HEK293 (cell line): ENCODE measurements at regions of chr6 and their contacts with region 1.

Region 1: DNA sequence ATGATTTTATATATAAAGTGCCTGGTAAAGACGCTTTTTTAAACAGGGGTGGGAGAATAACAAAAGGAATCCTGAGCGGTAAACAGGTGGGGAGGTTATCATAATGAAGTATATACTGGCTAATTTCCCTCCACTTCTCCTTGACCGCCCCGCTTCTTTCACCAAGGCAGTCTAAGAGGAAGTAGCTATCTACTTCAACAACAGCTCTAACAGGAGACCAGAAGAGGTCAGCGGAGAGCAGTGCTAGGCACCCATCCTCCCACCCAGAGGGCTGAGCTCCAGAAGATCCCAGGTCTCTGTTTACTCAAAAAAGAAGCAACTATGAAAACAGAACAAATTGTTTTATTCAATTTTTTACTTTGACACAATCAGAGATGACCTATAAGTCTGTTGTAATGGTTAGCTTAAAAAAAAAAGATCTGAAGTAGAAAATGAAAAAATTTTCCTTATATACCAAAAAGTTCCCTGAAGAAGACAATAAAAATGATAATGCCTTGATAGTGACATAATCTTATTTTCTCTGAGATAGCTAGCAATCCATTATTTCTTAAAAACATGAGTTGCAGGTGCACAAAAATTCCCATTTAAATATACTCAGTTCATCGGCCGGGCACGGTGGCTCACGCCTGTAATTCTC is 141.1 kb downstream of the PDSS2 start:
- H3K4me3 ChIP-seq: no peak overlapping the region
- H3K27ac ChIP-seq: no peak overlapping the region
- H3K4me1 ChIP-seq: peaks cover 5% of the 10 kb centered on the region; the same call in 1 of the 2 replicates
- CTCF ChIP-seq: peak; percentile 48; the same call in 1 of the 2 replicates

Region 2: DNA sequence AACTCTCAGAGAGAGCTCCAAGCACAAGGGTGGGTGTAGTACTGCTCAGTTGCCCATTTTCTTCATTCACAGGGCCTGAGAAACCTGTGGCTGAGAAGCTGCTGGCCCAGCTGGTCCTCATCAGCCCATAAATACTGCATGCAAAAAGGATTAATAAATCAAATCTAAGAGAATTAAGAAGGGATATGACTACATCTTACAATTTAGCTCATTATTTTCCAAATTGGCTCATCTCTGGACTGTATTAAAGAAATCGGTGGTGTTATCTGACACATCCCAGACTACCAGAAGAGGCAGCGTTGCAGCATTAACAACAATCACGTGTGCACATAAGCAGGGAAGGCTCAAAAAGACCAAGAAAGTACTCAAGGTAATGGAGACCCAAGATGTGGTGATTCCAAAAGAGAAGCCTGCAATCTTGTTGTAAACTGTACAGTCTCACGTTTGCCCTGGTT is 434.4 kb before region 1 on chr6:
- CTCF ChIA-PET with region 1: no interaction called
- POLR2A ChIA-PET with region 1: no interaction called
- H3K4me3 ChIP-seq: no peak overlapping the region
- H3K27ac ChIP-seq: no peak overlapping the region
- H3K4me1 ChIP-seq: peaks cover 4% of the 10 kb centered on the region; the same call in 1 of the 2 replicates
- CTCF ChIP-seq: no peak

Region 3: DNA sequence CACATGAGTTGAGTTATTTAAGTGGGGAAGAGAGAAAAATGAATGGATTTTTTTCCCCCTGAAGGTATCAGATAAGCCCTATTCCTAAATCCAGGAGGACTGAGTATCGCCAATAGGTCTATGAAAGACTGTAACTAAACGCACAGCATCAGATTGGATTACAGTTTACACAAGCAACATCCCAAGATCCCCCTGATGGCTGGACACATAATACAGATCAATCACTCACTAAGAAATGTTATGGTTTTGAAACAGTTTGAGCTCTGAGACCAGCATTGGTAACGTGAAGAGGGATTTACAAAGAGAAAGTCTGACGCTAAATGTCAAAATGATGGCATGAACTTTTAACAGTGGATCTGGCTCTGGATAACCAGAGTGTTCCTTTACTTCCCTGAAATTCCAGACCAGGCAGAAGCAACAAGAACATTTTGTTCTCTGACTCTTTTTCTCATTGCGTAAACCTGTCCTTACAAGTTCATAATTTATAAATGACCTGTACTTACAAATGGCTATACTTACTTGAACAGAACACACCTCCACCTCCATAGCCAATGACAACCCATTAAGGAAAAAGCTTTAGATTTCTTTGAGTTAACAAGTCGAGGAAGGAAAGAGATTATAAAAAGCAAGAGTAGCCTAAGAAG is 71.1 kb before region 1 on chr6:
- CTCF ChIA-PET with region 1: no interaction called
- POLR2A ChIA-PET with region 1: no interaction called
- H3K4me3 ChIP-seq: no peak overlapping the region
- H3K27ac ChIP-seq: no peak overlapping the region
- H3K4me1 ChIP-seq: peaks cover 20% of the 10 kb centered on the region
- CTCF ChIP-seq: no peak

Region 4: GRCh38 chr6:107330168-107330567 is 11.9 kb after region 1 on chr6:
- CTCF ChIA-PET with region 1: interaction called, 17 read pairs
- POLR2A ChIA-PET with region 1: no interaction called
- H3K4me3 ChIP-seq: no peak overlapping the region
- H3K27ac ChIP-seq: no peak overlapping the region
- H3K4me1 ChIP-seq: no peaks in the 10 kb centered on the region; the same call in 1 of the 2 replicates
- CTCF ChIP-seq: no peak

Region 5: GRCh38 chr6:107418118-107418517 is 99.9 kb after region 1 on chr6:
- CTCF ChIA-PET with region 1: interaction called, 17 read pairs
- POLR2A ChIA-PET with region 1: no interaction called
- H3K4me3 ChIP-seq: no peak overlapping the region
- H3K27ac ChIP-seq: no peak overlapping the region
- H3K4me1 ChIP-seq: peaks cover 4% of the 10 kb centered on the region; the same call in 1 of the 2 replicates
- CTCF ChIP-seq: no peak

Region 6: DNA sequence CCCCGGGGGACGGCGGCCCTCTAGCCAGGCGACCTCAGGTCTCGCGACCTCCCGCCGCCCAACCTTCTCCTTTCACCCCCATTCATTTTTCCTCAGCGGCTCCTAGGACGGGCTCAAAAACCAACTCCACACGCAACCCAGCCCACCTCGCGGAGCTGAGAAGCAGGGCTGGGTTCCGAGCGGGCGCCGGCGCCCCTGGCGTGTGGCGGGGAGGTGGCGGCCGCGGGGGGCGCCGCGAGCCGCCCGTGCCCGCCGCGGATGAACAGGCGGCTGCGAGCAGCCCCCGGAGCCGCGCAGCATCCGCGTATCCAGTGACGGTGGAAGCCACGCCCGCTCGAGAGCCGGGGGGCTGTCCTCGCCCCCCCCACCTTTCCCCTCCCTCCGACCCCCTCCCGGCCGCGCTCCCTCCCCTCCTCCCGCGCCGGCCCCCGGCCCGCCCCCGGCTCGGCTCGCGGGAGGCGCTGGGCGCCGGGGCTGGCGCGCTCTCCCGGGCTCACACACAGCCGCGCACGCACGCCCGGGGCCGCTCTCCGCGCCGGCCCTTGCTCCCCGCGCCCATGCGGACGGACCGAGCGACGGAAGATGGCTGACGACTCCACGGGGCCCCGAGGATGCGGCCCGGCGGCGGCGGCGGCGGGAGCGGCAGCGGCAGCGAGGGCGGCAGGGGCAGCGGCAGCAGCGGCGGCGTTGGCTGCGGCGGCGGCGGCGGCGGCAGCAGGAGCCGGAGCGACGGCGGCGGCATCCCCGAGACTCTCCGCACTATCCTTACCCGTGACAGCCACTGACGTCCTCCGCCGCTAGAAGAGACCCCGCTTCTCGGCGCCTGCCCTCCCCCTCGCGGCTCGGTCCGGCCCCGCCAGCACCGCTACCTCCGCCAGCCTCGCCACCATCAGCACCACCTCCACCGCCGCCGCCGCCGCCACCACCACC is 171.7 kb after region 1 on chr6 and contains the start of gene SOBP:
- CTCF ChIA-PET with region 1: interaction called, 12 read pairs
- POLR2A ChIA-PET with region 1: interaction called, 4 read pairs
- H3K4me3 ChIP-seq: peak within 1 kb of the TSS; percentile 88
- H3K27ac ChIP-seq: peak within 1 kb of the TSS; percentile 94
- H3K4me1 ChIP-seq: peaks cover 29% of the 10 kb centered on the region
- CTCF ChIP-seq: 0 out of 2 replicates have a peak, but pooled peaks have one; percentile 17

Region 7: DNA sequence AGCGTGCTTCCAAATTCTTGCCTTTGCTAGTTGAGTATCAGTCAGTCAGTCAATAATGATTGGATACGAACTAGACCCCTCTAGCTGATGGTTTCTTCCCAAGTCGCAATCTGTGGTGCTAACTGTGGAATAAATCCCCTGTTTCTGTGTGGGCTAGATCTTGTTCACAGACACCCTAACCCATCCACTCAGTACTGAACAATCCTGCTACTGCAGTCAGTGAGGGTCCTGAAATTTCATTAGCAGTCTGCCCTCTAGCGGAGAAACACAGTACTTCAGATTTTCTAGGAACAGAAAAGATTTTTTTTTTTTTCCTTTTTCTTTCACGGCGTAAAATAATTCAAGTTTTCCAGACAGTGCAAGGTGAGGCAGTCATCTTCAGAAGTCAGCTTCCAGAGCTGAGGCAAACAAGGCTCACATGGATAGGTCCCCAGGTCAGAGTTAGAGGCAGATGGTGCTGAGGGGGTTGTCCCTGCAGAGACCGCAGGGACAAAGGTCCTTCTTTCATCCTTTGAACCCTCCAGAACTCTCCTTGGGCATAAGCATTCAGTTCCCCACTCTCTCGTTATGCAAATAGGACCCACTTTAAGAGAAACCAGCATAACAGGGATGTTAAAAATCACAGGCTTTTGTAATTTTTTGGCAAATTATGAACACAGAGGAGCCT is 386.3 kb after region 1 on chr6:
- CTCF ChIA-PET with region 1: interaction called, 16 read pairs
- POLR2A ChIA-PET with region 1: no interaction called
- H3K4me3 ChIP-seq: no peak overlapping the region
- H3K27ac ChIP-seq: no peak overlapping the region
- H3K4me1 ChIP-seq: no peaks in the 10 kb centered on the region
- CTCF ChIP-seq: 0 out of 2 replicates have a peak, but pooled peaks have one; percentile 21